ENCODE measurements at regions of chr1 and their contacts with region 1.

Region 1: DNA sequence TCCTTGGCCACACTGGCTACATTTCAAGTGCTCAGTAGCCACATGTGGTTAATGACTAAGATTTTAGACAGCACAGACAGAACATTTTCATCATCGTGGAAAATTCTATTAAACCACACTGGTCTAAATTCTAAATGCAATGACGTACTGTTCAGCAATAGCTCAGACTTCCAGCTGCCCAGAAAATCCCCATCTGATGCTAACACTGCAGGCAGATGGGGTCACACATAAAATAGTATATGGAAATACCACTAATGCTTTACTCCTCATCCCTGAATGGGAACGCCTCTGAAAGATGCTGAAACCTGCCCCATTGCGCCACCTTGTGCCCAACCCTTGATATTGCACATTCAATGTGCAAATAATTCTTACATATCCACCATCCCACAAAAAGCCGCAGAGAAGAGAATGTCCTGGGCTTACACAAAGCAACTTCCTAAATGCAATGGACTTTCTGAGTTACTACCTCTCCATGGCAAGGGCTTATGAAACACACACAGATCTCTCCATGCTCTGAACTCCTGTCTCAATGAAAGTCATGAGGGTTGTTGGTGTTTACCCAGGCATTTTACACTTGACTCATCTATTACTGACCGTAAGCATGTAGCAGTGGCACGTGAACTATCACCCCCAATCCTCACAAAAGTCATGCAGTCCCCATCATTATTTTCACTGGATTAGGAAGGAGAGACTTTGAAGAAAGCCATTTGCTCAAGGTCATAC is 20.3 kb upstream of the SLC5A9 start:
- DNase-seq: peak in 1 of 2 donors; percentile 78
- H3K4me3 ChIP-seq: no peak overlapping the region
- H3K27ac ChIP-seq: no peak overlapping the region
- H3K4me1 ChIP-seq: peaks cover 0 to 7% of the 10 kb centered on the region in 2 donors
- H3K27me3 ChIP-seq: no peaks in the 10 kb centered on the region
- CTCF ChIP-seq: peak; percentile 66 to 82 (median 76)

Region 2: GRCh38 chr1:47751996-47752451 is 450.2 kb before region 1 on chr1:
- intact Hi-C with region 1: loop called (anchors 5 kb)
- DNase-seq: peak; percentile 35 to 76
- H3K4me3 ChIP-seq: peak overlapping the region in 1 of 2 donors; percentile 20
- H3K27ac ChIP-seq: peak overlapping the region; percentile 58 to 75
- H3K4me1 ChIP-seq: peaks cover 3 to 13% of the 10 kb centered on the region in 2 donors
- H3K27me3 ChIP-seq: no peaks in the 10 kb centered on the region
- CTCF ChIP-seq: no peak

Region 3: GRCh38 chr1:47881505-47882442 is 320.4 kb before region 1 on chr1:
- intact Hi-C with region 1: no loop called
- DNase-seq: no peak
- H3K4me3 ChIP-seq: no peak overlapping the region
- H3K27ac ChIP-seq: no peak overlapping the region
- H3K4me1 ChIP-seq: no peaks in the 10 kb centered on the region
- H3K27me3 ChIP-seq: no peaks in the 10 kb centered on the region
- CTCF ChIP-seq: no peak

Region 4: GRCh38 chr1:48216941-48217340 is 14.8 kb after region 1 on chr1:
- intact Hi-C with region 1: no loop called
- DNase-seq: no peak
- H3K4me3 ChIP-seq: no peak overlapping the region
- H3K27ac ChIP-seq: no peak overlapping the region
- H3K4me1 ChIP-seq: peaks cover 0 to 9% of the 10 kb centered on the region in 2 donors
- H3K27me3 ChIP-seq: no peaks in the 10 kb centered on the region
- CTCF ChIP-seq: no peak

Region 5: DNA sequence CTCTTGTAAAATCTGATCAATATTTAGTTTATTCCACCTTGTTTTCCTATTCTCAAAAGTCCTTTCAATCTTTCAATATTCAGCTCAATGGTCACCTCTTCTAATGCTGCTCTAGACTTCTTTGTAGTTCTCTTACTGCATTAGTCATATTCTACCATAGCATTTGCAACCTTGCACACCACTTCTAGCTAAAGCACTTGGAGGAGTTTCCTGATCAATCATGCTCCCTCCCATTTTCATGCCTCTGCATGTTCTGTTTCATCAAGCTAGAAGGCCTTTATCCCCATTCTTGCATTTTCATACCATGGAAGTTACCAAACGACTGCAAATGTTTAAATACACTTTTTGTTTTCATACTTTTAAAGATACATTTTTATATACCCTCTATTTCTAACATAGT is 92.5 kb after region 1 on chr1:
- intact Hi-C with region 1: no loop called
- DNase-seq: no peak
- H3K4me3 ChIP-seq: no peak overlapping the region
- H3K27ac ChIP-seq: no peak overlapping the region
- H3K4me1 ChIP-seq: no peaks in the 10 kb centered on the region
- H3K27me3 ChIP-seq: no peaks in the 10 kb centered on the region
- CTCF ChIP-seq: no peak

Region 6: GRCh38 chr1:48387409-48387808 is 185.2 kb after region 1 on chr1:
- intact Hi-C with region 1: no loop called
- DNase-seq: no peak
- H3K4me3 ChIP-seq: no peak overlapping the region
- H3K27ac ChIP-seq: no peak overlapping the region
- H3K4me1 ChIP-seq: no peaks in the 10 kb centered on the region
- H3K27me3 ChIP-seq: no peaks in the 10 kb centered on the region
- CTCF ChIP-seq: no peak